ENCODE measurements at regions of chr18 and their contacts with region 1.

Region 1: GRCh38 chr18:68714609-68715496 is at the start of gene TMX3:
- DNase-seq: peak; percentile 83 to 97 (median 91)
- ATAC-seq: peak; percentile 98
- H3K4me3 ChIP-seq: peak within 1 kb of the TSS; percentile 60 to 81
- H3K4me3 Mint-ChIP-seq: peak within 1 kb of the TSS; percentile 97
- H3K27ac ChIP-seq: peak within 1 kb of the TSS; percentile 57 to 60
- H3K27ac Mint-ChIP-seq: peak within 1 kb of the TSS; percentile 94
- H3K4me1 ChIP-seq: peaks cover 31% of the 10 kb centered on the region
- H3K4me1 Mint-ChIP-seq: peaks cover 50% of the 10 kb centered on the region
- H3K27me3 ChIP-seq: no peaks in the 10 kb centered on the region
- H3K27me3 Mint-ChIP-seq: no peaks in the 10 kb centered on the region
- CTCF ChIP-seq: no peak
- total RNA-seq, gene TMX3: 28.3 to 28.5 TPM

Region 2: GRCh38 chr18:68448736-68449135 is 266.1 kb before region 1 on chr18:
- CTCF ChIA-PET with region 1: no interaction called
- POLR2A ChIA-PET with region 1: no interaction called
- intact Hi-C with region 1: no loop called
- DNase-seq: no peak
- ATAC-seq: no peak
- H3K4me3 ChIP-seq: no peak overlapping the region
- H3K4me3 Mint-ChIP-seq: no peak overlapping the region
- H3K27ac ChIP-seq: no peak overlapping the region
- H3K27ac Mint-ChIP-seq: no peak overlapping the region
- H3K4me1 ChIP-seq: no peaks in the 10 kb centered on the region
- H3K4me1 Mint-ChIP-seq: no peaks in the 10 kb centered on the region
- H3K27me3 ChIP-seq: no peaks in the 10 kb centered on the region
- H3K27me3 Mint-ChIP-seq: peaks cover 2% of the 10 kb centered on the region
- CTCF ChIP-seq: no peak

Region 3: DNA sequence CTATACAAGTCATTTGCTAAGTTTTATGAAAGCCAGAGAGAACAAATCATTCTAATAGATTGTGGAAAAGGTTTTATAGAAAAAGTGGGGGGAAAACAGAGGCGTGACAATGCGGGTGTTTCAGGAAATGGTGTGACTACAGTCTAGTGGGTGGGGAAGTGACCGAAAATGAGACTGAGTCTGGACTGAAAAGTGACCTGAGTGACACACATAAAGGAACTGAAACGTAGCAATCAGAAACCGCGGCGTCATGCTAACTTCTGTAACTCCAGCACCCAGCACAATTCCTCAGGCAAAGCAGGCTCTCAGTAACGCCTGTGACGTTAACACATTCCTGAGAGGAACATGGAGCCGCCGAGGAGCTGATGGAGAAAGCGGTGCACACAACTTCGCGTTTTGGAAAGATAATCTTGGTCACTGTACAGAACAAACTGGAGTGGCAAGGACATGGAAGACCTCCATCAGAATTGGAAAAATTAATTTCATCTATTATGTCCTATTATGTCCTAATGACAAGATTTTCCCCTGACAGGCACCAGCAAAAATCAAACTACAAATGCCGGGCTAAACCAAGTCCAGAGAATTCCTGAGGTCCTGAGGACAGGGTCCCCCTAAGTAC is 1234.2 kb after region 1 on chr18:
- CTCF ChIA-PET with region 1: no interaction called
- POLR2A ChIA-PET with region 1: no interaction called
- intact Hi-C with region 1: loop called in 1 of 2 experiments (anchors 10 kb)
- DNase-seq: peak in 2 of 9 experiments; percentile 50 to 65
- ATAC-seq: no peak
- H3K4me3 ChIP-seq: no peak overlapping the region
- H3K4me3 Mint-ChIP-seq: no peak overlapping the region
- H3K27ac ChIP-seq: peak overlapping the region in 1 of 2 experiments; percentile 69
- H3K27ac Mint-ChIP-seq: no peak overlapping the region
- H3K4me1 ChIP-seq: peaks cover 66% of the 10 kb centered on the region
- H3K4me1 Mint-ChIP-seq: peaks cover 30% of the 10 kb centered on the region
- H3K27me3 ChIP-seq: no peaks in the 10 kb centered on the region
- H3K27me3 Mint-ChIP-seq: no peaks in the 10 kb centered on the region
- CTCF ChIP-seq: no peak

Region 4: GRCh38 chr18:70205421-70206397 is 1490.9 kb after region 1 on chr18 and contains the start of gene RTTN:
- CTCF ChIA-PET with region 1: no interaction called
- POLR2A ChIA-PET with region 1: no interaction called
- intact Hi-C with region 1: loop called (anchors 1 kb)
- DNase-seq: peak; percentile 83 to 95 (median 90)
- ATAC-seq: peak; percentile 92
- H3K4me3 ChIP-seq: peak within 1 kb of the TSS; percentile 89 to 96
- H3K4me3 Mint-ChIP-seq: peak within 1 kb of the TSS; percentile 97
- H3K27ac ChIP-seq: peak within 1 kb of the TSS; percentile 76 to 95
- H3K27ac Mint-ChIP-seq: peak within 1 kb of the TSS; percentile 99
- H3K4me1 ChIP-seq: no peaks in the 10 kb centered on the region
- H3K4me1 Mint-ChIP-seq: peaks cover 32% of the 10 kb centered on the region
- H3K27me3 ChIP-seq: peaks cover 0 to 4% of the 10 kb centered on the region in 2 experiments
- H3K27me3 Mint-ChIP-seq: peaks cover 3% of the 10 kb centered on the region
- CTCF ChIP-seq: no peak
- total RNA-seq, gene RTTN: 20.2 to 21.9 TPM

Measured in CD8-positive, alpha-beta T cell (primary cell).